ENCODE measurements at regions of chr5 and their contacts with region 1.

Region 1: GRCh38 chr5:111063700-111064322 is 7.7 kb upstream of the TSLP start:
- DNase-seq: no peak
- ATAC-seq: no peak
- H3K4me3 ChIP-seq: no peak overlapping the region
- H3K27ac ChIP-seq: no peak overlapping the region
- H3K4me1 ChIP-seq: no peaks in the 10 kb centered on the region
- H3K27me3 ChIP-seq: peaks cover 0 to 34% (median 17%) of the 10 kb centered on the region in 7 donors
- CTCF ChIP-seq: peak in 8 of 9 donors; percentile 8 to 57 (median 44)

Region 2: DNA sequence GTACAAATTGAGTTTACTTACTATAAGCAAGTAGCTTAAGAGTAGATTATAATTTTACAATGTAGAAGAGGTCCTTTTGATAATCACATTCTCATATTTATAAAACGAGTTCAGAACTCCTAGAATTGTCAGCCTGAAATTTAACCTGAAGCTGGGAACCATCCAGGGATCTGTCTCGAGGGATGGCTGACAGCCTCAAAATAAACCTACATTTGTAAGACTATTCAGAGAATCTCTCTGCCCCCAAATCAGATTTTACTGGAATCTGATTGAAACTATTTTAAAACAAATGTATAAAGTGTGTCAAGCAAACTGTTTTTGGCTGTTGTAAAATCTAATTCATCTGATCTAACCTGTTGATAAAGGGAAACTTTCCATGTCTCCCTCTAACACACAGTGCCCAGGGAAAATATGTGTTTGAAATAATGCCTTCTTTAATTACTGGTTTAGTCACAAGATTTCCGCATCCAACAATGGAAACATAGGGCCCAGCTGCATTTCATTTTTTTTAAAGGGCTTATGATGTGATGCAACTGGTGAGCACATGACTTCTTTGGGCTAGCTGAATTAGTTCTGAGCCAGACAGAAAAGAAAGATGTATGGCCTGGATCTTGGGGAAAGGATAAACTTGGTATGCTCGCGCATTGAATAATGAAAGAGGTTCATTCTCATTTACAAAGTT is 294.7 kb before region 1 on chr5:
- intact Hi-C with region 1: loop called in 1 of 10 experiments (anchors 10 kb)
- DNase-seq: no peak
- ATAC-seq: no peak
- H3K4me3 ChIP-seq: no peak overlapping the region
- H3K27ac ChIP-seq: no peak overlapping the region
- H3K4me1 ChIP-seq: peaks cover 0 to 4% (median 0%) of the 10 kb centered on the region in 9 donors
- H3K27me3 ChIP-seq: peaks cover 0 to 2% (median 0%) of the 10 kb centered on the region in 7 donors
- CTCF ChIP-seq: no peak

Region 3: DNA sequence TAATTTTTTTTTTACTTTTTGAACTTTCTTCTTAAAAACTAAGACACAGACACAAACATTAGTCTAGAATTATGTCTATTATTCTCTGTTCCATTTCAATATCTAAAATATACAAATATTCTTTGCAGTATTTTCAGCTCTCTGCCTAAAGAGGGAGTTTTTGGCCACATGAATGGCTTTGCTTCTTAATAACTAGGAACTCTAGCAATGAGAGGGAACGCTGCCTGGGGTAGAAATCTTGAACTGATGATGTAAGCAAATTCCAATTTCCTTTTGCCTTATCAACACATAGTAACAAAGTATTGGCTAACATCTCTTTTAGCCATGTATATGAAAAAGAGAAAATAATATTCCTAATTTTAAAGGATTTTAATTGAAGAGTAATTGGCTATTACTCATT is 273.1 kb before region 1 on chr5:
- intact Hi-C with region 1: loop called in 2 of 10 experiments (anchors 2 to 5 kb)
- DNase-seq: no peak
- ATAC-seq: no peak
- H3K4me3 ChIP-seq: no peak overlapping the region
- H3K27ac ChIP-seq: no peak overlapping the region
- H3K4me1 ChIP-seq: no peaks in the 10 kb centered on the region
- H3K27me3 ChIP-seq: no peaks in the 10 kb centered on the region
- CTCF ChIP-seq: peak in 6 of 9 donors; percentile 25 to 55 (median 40)

Measured in heart right ventricle (tissue), 16 donors.